ENCODE measurements at regions of chr22 and their contacts with region 1.

Region 1: GRCh38 chr22:40177738-40178416 is at the start of gene TNRC6B:
- DNase-seq: peak; percentile 95
- H3K4me3 Mint-ChIP-seq: peak within 1 kb of the TSS; percentile 80
- H3K27ac Mint-ChIP-seq: peak within 1 kb of the TSS; percentile 91
- H3K4me1 Mint-ChIP-seq: peaks cover 45% of the 10 kb centered on the region
- H3K27me3 Mint-ChIP-seq: no peaks in the 10 kb centered on the region
- total RNA-seq, gene TNRC6B: 27.3 and 31.3 TPM in 2 replicates

Region 2: DNA sequence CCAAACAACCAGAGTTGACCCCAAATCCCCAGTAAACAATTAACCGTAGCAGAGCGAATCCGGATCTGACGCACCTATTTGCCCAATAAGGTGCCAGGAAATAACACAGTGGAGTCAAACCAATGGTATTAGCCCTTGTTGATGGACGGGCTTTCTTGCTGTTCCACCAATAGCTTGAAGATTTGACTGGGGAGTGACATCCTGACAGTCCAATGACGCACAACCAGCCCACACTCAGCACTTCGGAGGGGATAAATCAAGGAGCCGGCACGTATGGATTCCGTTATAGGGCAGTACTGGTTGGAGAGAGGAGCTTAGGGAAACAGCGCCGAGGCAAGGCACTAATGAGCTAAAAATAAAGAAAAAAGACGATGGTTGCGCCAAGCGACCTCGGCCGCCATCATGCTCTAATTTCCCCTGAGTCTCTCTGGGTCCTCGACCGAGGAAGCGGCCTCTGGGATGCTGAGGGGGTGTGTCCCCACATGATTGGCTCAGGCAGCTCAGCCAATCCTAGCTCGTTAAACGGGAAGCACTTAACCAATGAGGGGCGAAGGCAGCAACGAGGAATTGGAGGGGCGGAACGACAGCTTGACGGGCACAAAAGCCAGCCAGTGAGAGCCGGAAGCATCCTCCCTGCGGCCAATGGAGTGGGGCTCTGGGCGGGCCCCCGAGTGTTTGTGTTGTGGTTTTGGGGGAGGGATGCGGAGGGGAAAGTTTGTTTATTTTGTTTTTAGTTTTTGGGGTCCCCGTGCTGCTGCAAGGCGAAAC is 133.6 kb before region 1 on chr22:
- intact Hi-C with region 1: loop called (anchors 1 kb)
- DNase-seq: peak; percentile 100
- H3K4me3 Mint-ChIP-seq: peak overlapping the region; percentile 92
- H3K27ac Mint-ChIP-seq: peak overlapping the region; percentile 99
- H3K4me1 Mint-ChIP-seq: peaks cover 14% of the 10 kb centered on the region
- H3K27me3 Mint-ChIP-seq: peaks cover 9% of the 10 kb centered on the region

Region 3: GRCh38 chr22:40107851-40108378 is 70.0 kb before region 1 on chr22:
- intact Hi-C with region 1: loop called (anchors 5 kb)
- DNase-seq: peak; percentile 79
- H3K4me3 Mint-ChIP-seq: peak overlapping the region; percentile 86
- H3K27ac Mint-ChIP-seq: peak overlapping the region; percentile 88
- H3K4me1 Mint-ChIP-seq: peaks cover 39% of the 10 kb centered on the region
- H3K27me3 Mint-ChIP-seq: no peaks in the 10 kb centered on the region

Region 4: DNA sequence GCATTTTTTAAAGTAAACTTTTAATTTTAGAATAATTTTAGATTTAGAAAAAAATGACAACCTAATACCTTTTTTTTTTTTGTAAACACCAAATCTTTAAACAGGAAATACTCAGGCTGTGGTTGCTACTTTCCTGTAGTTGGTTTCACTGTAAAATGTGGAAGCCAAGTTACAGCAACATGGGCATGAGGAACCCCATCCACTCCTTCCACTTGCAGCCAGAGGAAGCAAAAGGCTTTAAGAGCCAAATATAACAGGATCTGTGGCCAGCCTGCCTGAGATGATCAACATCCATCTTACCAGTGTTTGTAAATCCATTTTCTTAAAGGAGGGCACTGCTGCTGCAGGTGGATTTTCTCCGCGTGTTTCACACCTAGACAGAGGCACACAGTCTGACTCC is 66.0 kb after region 1 on chr22:
- intact Hi-C with region 1: loop called (anchors 5 kb)
- DNase-seq: peak; percentile 72
- H3K4me3 Mint-ChIP-seq: peak overlapping the region; percentile 60
- H3K27ac Mint-ChIP-seq: peak overlapping the region; percentile 42
- H3K4me1 Mint-ChIP-seq: peaks cover 57% of the 10 kb centered on the region
- H3K27me3 Mint-ChIP-seq: no peaks in the 10 kb centered on the region

Region 5: DNA sequence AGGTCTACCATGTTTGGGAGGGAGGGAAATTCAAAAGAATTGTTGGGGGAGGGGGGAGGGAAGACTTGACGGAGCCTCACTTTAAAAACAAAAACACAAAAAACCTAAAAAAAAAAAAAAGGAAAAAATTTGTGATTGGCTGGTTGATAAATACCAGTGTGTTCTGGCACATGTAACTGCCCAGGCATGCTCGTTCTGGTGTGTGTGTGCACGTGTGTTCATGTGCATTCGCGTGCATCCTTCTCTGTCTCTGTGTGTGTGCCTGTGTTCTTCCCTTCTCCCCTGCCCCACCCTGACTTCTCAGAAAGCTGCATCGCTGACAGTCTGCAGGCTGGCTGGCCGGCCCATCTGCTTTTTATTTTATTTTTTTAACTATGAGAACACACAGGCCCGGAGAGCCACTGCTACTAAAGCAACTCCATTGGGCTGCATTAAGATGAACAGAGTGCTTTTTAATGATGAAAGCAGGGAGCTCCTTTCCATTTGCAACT is 145.8 kb after region 1 on chr22:
- intact Hi-C with region 1: loop called (anchors 2 kb)
- DNase-seq: peak; percentile 81
- H3K4me3 Mint-ChIP-seq: peak overlapping the region; percentile 81
- H3K27ac Mint-ChIP-seq: peak overlapping the region; percentile 99
- H3K4me1 Mint-ChIP-seq: peaks cover 60% of the 10 kb centered on the region
- H3K27me3 Mint-ChIP-seq: no peaks in the 10 kb centered on the region